Activated B cell treated with CpG ODN at 0.5 μM for 24 hours (primary cell): ENCODE measurements at regions of chr12 and their contacts with region 1.

Region 1: GRCh38 chr12:12376646-12377448 is 20.0 kb downstream of the BORCS5 start:
- DNase-seq: no peak
- ATAC-seq: peak; percentile 83
- H3K4me3 Mint-ChIP-seq: no peak overlapping the region
- H3K27ac Mint-ChIP-seq: no peak overlapping the region
- H3K4me1 Mint-ChIP-seq: peaks cover 19% of the 10 kb centered on the region
- H3K27me3 Mint-ChIP-seq: no peaks in the 10 kb centered on the region
- CTCF ChIP-seq: no peak

Region 2: DNA sequence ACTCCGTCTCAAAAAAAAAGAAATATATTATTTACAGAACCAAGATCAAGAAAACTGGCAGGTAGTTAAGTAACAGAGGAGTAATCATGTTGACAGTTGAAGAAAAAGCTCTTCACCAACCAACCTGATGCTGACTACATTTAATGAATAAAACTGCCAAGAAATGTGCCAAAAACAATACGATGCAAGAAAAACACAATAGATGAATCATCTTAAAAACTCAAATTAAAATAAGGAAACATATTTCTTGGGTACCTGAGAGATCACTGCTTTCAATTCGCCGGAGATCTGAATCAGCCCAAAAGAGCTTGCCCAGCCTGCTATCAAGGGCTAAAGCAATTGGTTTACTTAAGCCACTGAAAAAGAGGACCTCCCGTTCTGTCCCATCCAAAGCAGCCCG is 229.7 kb before region 1 on chr12:
- CTCF ChIA-PET with region 1: no interaction called
- POLR2A ChIA-PET with region 1: no interaction called
- intact Hi-C with region 1: no loop called
- DNase-seq: no peak
- ATAC-seq: no peak
- H3K4me3 Mint-ChIP-seq: no peak overlapping the region
- H3K27ac Mint-ChIP-seq: no peak overlapping the region
- H3K4me1 Mint-ChIP-seq: no peaks in the 10 kb centered on the region
- H3K27me3 Mint-ChIP-seq: no peaks in the 10 kb centered on the region
- CTCF ChIP-seq: no peak

Region 3: DNA sequence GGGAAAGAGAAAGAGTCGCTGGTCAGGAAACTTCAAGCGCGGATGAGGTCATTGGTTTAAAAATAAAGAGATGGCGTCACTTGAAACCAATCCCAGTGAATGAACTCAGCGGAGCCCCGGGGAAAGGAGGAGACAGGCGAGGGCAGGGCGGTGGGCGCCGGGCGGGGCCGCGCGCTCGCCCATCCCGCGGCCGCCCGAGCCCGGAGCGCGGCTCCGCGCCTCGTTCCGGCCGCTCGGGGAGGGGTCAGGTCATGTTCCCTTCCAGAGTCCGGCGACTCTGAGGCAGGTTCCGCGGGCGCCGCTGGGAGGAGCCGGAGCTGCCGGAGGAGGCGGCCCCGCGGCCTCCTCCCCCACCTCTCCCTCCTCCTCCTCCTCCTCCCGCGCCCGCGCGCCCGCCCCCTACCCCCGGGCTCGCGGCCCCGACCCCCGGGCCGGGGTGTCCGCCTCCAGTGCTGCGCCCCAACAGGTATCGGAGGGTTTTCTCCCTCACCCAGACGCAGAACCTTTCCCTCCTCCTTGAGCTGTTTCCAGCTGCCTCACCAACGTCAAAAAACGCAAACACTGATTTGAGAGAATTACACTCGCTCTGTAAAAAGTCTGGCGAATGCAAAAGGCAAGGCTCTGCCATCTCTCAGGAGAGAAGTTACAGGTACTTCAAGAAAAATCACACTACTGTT is 185.9 kb after region 1 on chr12 and contains the start of gene DUSP16:
- CTCF ChIA-PET with region 1: interaction called, 30 read pairs
- POLR2A ChIA-PET with region 1: interaction called, 4 read pairs
- intact Hi-C with region 1: loop called (anchors 1 kb)
- DNase-seq: peak; percentile 65
- ATAC-seq: peak; percentile 68
- H3K4me3 Mint-ChIP-seq: peak within 1 kb of the TSS; percentile 84
- H3K27ac Mint-ChIP-seq: peak within 1 kb of the TSS; percentile 79
- H3K4me1 Mint-ChIP-seq: peaks cover 15% of the 10 kb centered on the region
- H3K27me3 Mint-ChIP-seq: peaks cover 3% of the 10 kb centered on the region
- CTCF ChIP-seq: no peak
- total RNA-seq, gene DUSP16: 1.1 and 2.0 TPM in 2 replicates

Region 4: GRCh38 chr12:12696562-12697383 is 319.9 kb after region 1 on chr12:
- CTCF ChIA-PET with region 1: no interaction called
- POLR2A ChIA-PET with region 1: interaction called, 5 read pairs
- intact Hi-C with region 1: loop called (anchors 2 kb)
- DNase-seq: peak; percentile 78
- ATAC-seq: peak; percentile 80
- H3K4me3 Mint-ChIP-seq: peak overlapping the region; percentile 96
- H3K27ac Mint-ChIP-seq: peak overlapping the region; percentile 99
- H3K4me1 Mint-ChIP-seq: peaks cover 33% of the 10 kb centered on the region
- H3K27me3 Mint-ChIP-seq: no peaks in the 10 kb centered on the region
- CTCF ChIP-seq: no peak

Region 5: DNA sequence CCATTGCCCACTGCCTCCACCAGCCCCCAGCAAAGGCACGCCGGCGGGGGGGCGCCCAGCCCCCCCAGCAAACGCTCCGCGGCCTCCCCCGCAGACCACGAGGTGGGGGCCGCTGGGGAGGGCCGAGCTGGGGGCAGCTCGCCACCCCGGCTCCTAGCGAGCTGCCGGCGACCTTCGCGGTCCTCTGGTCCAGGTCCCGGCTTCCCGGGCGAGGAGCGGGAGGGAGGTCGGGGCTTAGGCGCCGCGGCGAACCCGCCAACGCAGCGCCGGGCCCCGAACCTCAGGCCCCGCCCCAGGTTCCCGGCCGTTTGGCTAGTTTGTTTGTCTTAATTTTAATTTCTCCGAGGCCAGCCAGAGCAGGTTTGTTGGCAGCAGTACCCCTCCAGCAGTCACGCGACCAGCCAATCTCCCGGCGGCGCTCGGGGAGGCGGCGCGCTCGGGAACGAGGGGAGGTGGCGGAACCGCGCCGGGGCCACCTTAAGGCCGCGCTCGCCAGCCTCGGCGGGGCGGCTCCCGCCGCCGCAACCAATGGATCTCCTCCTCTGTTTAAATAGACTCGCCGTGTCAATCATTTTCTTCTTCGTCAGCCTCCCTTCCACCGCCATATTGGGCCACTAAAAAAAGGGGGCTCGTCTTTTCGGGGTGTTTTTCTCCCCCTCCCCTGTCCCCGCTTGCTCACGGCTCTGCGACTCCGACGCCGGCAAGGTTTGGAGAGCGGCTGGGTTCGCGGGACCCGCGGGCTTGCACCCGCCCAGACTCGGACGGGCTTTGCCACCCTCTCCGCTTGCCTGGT is 340.1 kb after region 1 on chr12 and contains the start of gene CDKN1B:
- CTCF ChIA-PET with region 1: interaction called, 5 read pairs
- POLR2A ChIA-PET with region 1: interaction called, 25 read pairs
- intact Hi-C with region 1: no loop called
- DNase-seq: peak; percentile 75
- ATAC-seq: peak; percentile 70
- H3K4me3 Mint-ChIP-seq: peak within 1 kb of the TSS; percentile 98
- H3K27ac Mint-ChIP-seq: peak within 1 kb of the TSS; percentile 97
- H3K4me1 Mint-ChIP-seq: peaks cover 67% of the 10 kb centered on the region
- H3K27me3 Mint-ChIP-seq: no peaks in the 10 kb centered on the region
- CTCF ChIP-seq: no peak
- total RNA-seq, gene CDKN1B: 56.6 and 59.0 TPM in 2 replicates

Region 6: DNA sequence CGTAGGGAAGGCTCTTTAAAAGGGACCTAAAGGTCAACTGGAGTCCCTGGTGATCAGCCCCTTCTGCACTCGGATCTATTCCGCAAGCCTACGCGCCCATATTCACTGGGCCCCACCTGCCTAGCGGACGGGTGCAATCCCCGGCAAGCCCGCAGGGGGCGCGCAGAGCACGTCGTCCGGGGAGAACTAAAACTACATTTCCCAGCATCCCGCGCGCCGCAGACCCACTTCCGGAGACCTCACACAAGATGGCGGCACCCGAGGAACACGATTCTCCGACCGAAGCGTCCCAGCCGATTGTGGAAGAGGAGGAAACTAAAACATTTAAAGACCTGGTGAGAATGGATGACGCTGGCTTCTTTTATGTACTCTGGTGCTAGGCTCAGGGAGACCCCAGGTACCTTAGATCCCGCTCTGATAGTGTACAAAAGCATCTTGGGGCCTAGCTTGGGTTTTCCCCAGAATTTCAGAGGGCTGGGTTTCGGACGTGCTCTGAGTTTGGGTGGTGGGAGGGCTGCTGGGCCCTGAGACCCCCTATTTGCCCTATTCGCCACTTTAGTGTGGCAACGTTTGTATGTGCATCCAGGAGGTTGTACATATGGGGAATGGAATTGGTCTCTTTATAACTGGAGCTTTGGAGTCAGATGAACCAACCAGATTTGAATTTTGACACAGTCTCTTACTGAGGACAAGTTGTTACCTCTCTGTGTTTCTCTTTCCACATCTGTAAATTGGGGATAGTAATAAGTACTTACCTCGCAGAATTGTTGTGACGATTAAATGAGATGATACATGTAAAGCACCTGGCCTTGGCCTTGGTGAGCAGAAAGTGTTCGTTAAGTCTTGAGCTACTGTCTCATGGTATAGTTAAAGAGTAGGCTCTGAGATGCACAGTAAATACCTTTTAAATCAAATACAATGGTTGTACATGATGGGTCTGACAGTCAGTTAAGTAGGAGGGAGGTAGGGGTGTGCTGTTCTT is 436.6 kb after region 1 on chr12 and contains the start of gene DDX47:
- CTCF ChIA-PET with region 1: interaction called, 4 read pairs
- POLR2A ChIA-PET with region 1: no interaction called
- intact Hi-C with region 1: loop called (anchors 1 kb)
- DNase-seq: peak; percentile 98
- ATAC-seq: peak; percentile 81
- H3K4me3 Mint-ChIP-seq: peak within 1 kb of the TSS; percentile 96
- H3K27ac Mint-ChIP-seq: peak within 1 kb of the TSS; percentile 93
- H3K4me1 Mint-ChIP-seq: peaks cover 69% of the 10 kb centered on the region
- H3K27me3 Mint-ChIP-seq: no peaks in the 10 kb centered on the region
- CTCF ChIP-seq: peak; percentile 87
- total RNA-seq, gene DDX47: 97.1 and 98.5 TPM in 2 replicates